HCT116 (cell line): ENCODE measurements at regions of chr4 and their contacts with region 1.

Region 1: DNA sequence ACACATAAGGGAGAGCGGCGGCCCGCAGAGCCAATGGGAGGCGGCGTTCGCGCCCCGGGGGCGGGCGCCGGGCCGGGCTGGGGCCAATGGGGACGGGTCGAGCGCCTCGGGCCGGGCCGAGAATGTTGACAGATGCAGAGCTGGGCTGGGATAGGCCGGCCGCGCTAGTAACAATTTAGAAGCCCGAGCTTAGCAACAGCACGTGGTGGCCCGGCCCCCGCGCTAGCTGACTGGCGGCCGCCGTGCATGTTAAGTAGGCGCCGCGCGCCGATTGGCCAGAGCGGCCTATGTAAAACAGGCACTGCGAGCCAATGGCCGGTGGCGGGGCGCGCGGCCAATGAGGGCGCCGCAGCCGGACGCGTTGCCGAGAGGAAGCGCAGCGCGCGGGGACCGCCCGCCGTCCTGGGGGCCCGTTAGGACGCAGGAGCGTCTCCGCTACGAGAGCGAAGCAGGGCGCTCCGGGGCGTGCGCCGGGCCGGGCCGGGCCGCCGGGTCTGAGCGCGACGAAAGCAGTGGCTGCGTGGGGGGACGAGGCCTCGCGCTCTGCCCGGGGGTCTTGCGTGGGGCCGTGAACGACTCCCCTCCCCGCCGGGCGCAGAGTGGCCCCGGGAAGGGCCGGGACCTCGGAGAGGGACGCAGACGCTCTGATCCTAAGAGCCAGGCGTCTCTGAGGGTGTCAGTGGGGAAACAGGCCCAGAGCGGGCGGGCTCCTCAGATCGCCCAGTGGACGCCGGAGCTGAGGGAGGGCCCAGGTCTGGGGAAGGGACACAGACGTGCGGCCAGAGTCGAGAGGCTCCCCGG is 434 bp upstream of the MXD4 start:
- DNase-seq: peak; percentile 97
- ATAC-seq: peak; percentile 91
- H3K4me3 ChIP-seq: peak overlapping the region; percentile 46 to 59
- H3K27ac ChIP-seq: peak overlapping the region; percentile 88
- H3K4me1 ChIP-seq: peaks cover 9 to 15% of the 10 kb centered on the region in 2 experiments; a peak in 3 of 4 replicates
- H3K27me3 ChIP-seq: no peaks in the 10 kb centered on the region
- CTCF ChIP-seq: no peak
- POLR2A ChIP-seq: peak; percentile 50
- RAD21 ChIP-seq: no peak

Region 2: GRCh38 chr4:1834047-1834775 is 428.1 kb before region 1 on chr4:
- CTCF ChIA-PET with region 1: no interaction called
- POLR2A ChIA-PET with region 1: no interaction called
- RAD21 ChIA-PET with region 1: no interaction called
- intact Hi-C with region 1: no loop called
- DNase-seq: no peak
- ATAC-seq: no peak
- H3K4me3 ChIP-seq: no peak overlapping the region
- H3K27ac ChIP-seq: no peak overlapping the region
- H3K4me1 ChIP-seq: no peaks in the 10 kb centered on the region
- H3K27me3 ChIP-seq: no peaks in the 10 kb centered on the region
- CTCF ChIP-seq: no peak
- POLR2A ChIP-seq: no peak
- RAD21 ChIP-seq: no peak

Region 3: DNA sequence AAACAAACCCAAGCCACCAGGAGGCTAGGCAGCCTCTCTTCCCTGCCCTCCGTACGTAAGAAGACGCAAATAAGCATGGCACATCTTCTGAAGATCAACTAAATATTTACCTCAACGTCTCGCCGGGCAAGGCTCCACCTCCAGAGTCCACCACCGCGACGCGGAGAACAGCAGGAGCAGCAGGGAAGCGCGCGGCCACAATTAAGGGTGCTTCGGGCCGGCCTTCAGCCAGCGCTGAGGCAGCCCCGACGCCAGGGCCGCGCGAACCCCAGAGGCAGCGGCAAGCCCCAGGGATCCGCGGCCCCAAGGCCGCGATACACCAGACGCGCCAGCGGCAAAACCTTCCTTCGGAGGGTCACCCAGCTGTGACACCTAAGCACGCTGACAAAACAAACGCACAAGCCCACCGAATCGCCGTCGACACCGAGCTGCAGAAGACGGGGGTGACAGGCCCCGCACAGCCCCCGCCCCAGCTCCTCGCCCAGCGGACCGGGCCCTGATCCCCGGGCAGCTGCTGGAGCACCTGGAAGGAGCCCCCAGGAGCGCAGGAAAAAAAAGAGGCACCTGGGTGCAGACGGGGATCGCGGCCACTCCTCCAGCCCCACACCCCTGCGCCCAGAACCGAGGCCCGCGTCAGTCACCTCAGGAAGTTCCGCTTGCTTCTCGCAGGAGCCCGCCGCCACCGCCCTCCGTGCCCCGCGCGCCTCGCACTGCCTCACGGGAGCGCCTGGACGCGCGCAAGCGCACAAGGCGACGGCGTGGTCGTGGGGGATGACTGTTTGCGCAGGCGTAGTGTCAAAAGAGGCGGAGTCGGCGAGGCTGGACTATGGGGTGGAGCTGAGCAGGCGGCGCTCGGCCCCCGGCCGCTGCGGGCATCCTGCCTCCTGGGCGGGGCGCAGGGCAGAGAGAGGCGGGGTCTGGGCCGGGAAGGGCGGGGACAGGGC is 20.7 kb before region 1 on chr4 and contains the starts of genes HAUS3 and POLN:
- CTCF ChIA-PET with region 1: no interaction called
- POLR2A ChIA-PET with region 1: interaction called, 3 read pairs
- RAD21 ChIA-PET with region 1: no interaction called
- intact Hi-C with region 1: loop called (anchors 1 kb)
- DNase-seq: peak; percentile 95
- ATAC-seq: peak; percentile 97
- H3K4me3 ChIP-seq: peak within 1 kb of the TSS; percentile 94 to 97
- H3K27ac ChIP-seq: peak within 1 kb of the TSS; percentile 72
- H3K4me1 ChIP-seq: peaks cover 7 to 27% of the 10 kb centered on the region in 2 experiments; a peak in 3 of 4 replicates
- H3K27me3 ChIP-seq: no peaks in the 10 kb centered on the region
- CTCF ChIP-seq: no peak
- POLR2A ChIP-seq: peak; percentile 71
- RAD21 ChIP-seq: 0 out of 2 replicates have a peak, but pooled peaks have one; percentile 8
- total RNA-seq, gene HAUS3: 17.3 TPM
- total RNA-seq, gene POLN: 3.1 TPM

Region 4: DNA sequence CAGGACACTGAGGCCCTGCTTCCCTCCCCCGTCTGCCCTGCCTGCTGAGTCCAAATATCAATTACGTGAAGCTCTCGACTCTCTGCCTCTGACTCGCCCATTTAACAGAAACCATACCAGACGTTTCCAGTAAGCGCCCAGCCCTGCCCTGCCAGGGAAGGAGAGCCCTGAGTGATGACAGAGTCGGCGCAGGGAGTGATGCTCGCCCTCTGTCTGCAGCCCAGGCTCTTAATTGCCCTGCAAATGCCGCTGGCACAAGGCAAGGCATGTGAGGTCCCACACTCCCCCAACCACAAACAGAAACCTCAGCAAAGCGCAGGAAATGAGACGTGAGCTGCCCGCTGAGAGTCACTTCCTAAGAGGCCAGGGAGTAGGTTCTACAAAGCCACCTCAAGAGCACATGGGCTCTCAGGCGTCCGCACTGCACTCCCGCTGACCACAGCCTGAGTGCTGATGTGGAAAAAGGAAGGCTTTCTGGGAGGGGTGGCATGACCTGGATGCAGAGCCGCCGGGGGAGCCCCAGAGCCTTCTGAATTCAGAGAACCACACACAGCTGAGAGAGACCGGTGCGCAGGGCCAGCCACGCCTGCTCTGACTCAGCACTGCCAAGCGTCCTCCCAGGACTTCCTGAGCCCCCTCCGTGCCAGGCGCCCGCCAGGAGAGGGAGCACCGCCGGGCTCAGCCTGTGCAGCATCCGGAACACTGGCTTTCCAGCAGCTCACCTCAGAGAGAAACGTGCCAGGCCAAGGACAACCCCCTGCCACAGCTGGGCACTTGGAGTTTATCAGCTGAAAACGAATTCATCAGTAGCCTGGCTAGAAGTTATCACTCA is 150.8 kb after region 1 on chr4:
- CTCF ChIA-PET with region 1: no interaction called
- POLR2A ChIA-PET with region 1: no interaction called
- RAD21 ChIA-PET with region 1: no interaction called
- intact Hi-C with region 1: loop called (anchors 5 kb)
- DNase-seq: peak; percentile 88
- ATAC-seq: peak; percentile 84
- H3K4me3 ChIP-seq: peak overlapping the region; percentile 47 to 58
- H3K27ac ChIP-seq: peak overlapping the region; percentile 91
- H3K4me1 ChIP-seq: peaks cover 32 to 81% of the 10 kb centered on the region in 2 experiments
- H3K27me3 ChIP-seq: no peaks in the 10 kb centered on the region
- CTCF ChIP-seq: peak in 2 of 3 experiments; percentile 49 to 71; a peak in 3 of 6 replicates
- POLR2A ChIP-seq: no peak
- RAD21 ChIP-seq: no peak

Region 5: DNA sequence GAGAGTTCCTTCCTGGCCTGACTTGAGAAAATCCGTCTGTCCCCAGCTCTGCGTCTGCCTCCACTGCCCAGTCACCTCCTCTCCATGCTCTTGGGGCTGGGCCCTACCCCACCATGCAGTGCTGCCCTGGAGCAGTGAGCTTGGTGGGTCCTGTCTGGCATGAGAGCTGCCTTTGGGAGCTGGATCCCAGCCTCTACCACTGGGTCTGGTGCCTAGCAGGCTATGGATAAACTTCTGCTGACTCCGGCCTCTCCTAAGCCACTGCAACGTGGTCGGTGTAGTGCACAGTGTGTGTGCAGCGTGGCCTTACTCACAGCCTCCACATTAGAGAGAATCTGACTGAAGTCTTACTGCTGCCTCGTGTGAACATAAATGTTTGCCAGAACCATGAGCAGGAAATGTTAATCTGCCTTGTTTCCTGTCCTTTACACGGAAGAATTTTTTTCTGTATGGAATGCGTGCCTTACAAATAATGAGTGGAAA is 859.8 kb after region 1 on chr4:
- CTCF ChIA-PET with region 1: no interaction called
- POLR2A ChIA-PET with region 1: no interaction called
- RAD21 ChIA-PET with region 1: no interaction called
- intact Hi-C with region 1: no loop called
- DNase-seq: no peak
- ATAC-seq: no peak
- H3K4me3 ChIP-seq: no peak overlapping the region
- H3K27ac ChIP-seq: no peak overlapping the region
- H3K4me1 ChIP-seq: no peaks in the 10 kb centered on the region
- H3K27me3 ChIP-seq: no peaks in the 10 kb centered on the region
- CTCF ChIP-seq: no peak
- POLR2A ChIP-seq: no peak
- RAD21 ChIP-seq: no peak